Right ventricle myocardium inferior (tissue), 1 donor: ENCODE measurements at regions of chr4 and their contacts with region 1.

Region 1: DNA sequence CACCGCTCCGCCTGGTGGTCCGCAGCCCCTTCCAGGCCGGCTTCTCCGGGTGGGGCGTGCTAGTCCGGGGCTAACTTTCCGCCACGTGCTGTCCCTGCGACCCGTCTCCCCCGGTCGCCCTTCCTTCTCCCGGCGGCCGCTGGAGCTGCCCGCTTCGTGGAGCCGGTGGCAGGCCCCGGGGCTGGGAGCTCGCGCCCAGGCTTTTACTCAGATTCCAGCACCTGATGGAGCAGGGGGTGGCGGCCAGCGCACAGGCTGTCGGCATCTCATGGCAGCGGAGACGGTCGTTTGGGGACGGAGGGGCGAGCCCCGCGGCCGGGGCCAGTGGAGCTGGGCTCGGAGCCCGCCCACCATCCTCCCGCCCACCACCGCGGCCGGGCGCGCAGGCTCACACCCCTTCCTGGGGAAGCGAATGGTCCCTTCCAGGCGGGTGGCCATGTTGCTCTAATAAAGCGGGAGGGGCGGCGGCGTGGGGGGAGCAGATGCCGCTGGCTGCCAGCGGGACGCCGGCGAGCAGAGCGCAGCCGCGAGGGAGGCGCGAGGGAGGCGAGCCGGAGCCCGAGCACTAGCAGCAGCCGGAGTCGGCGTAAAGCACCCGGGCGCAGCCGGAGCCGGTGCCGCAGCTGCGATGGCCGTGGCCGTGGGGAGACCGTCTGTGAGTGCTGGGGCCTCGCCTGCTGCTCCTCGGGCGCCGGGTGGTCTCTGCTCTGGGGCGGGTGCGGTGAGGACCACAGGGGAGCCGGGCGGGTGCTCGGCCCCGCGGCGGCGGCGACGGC is at the start of gene SEPTIN11:
- DNase-seq: peak; percentile 94
- ATAC-seq: peak; percentile 92
- total RNA-seq, gene SEPTIN11: 32.9 TPM

Region 2: GRCh38 chr4:76811604-76812412 is 137.7 kb before region 1 on chr4:
- intact Hi-C with region 1: loop called (anchors 10 kb)
- DNase-seq: no peak
- ATAC-seq: peak; percentile 75

Region 3: GRCh38 chr4:76984788-76985211 is 35.3 kb after region 1 on chr4:
- intact Hi-C with region 1: loop called (anchors 5 kb)
- DNase-seq: no peak
- ATAC-seq: peak; percentile 93

Region 4: GRCh38 chr4:77075869-77076799 is 126.7 kb after region 1 on chr4 and contains the start of gene CCNI:
- intact Hi-C with region 1: loop called (anchors 1 kb)
- DNase-seq: peak; percentile 97
- ATAC-seq: peak; percentile 97
- total RNA-seq, gene CCNI: 251 TPM